ENCODE measurements at regions of chr11 and their contacts with region 1.

Region 1: DNA sequence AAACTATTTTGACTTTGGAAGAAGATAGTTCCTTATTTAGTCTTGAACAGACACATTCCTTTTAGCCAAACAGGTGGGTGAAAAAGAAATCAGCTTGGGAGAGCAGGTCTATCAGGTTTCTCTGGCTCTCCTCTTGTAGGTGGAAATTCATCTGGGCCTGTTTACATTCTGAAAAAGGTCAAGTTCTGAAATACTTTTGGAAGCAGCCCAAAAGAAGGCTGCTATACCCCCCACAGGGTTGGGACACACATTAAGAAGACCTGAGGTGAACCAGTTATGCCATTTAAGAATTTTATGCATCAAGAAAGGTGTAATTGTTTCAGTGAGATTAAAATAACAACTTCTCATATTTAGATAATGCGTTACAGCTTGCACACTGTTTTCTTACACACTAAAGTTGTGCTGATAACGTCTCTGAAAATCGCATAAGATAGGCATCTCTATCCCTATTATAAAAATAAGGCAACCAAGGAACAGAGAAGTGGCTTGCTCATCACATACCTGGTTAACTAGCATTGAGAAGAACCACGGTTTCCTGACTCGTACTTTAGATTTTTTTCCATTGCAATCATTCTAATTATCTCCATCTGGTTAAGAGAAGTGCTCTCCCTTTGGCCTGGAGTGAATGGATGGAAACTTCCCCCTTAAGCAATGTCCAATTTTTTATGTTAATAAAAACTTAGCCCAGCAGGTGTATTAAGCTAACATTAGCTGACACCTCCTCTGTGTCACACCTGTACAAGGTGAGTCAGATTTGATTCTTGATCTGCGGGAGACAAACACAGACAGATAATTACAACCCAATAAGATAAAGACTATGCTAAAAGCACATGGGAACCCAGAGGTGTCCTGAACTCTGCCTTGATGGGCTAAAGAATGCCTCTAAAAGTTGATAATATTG is 60.5 kb upstream of the UCP3 start:
- DNase-seq: peak; percentile 28 to 39
- ATAC-seq: peak; percentile 73
- H3K4me3 ChIP-seq: peak overlapping the region; percentile 10 to 56 (median 32)
- H3K27ac ChIP-seq: peak overlapping the region; percentile 84 to 94 (median 90)
- H3K4me1 ChIP-seq: peaks cover 23 to 38% of the 10 kb centered on the region in 2 donors
- H3K27me3 ChIP-seq: no peaks in the 10 kb centered on the region
- CTCF ChIP-seq: no peak
- POLR2A ChIP-seq: peak in 1 of 2 donors; percentile 43

Region 2: GRCh38 chr11:73982969-73983740 is 86.2 kb before region 1 on chr11:
- in situ Hi-C with region 1: no loop called
- intact Hi-C with region 1: loop called (anchors 2 kb)
- DNase-seq: peak; percentile 93 to 95
- ATAC-seq: peak; percentile 84 to 86
- H3K4me3 ChIP-seq: peak overlapping the region; percentile 66 to 88 (median 75)
- H3K27ac ChIP-seq: peak overlapping the region; percentile 93 to 99 (median 95)
- H3K4me1 ChIP-seq: peaks cover 12 to 36% of the 10 kb centered on the region in 2 donors
- H3K27me3 ChIP-seq: no peaks in the 10 kb centered on the region
- CTCF ChIP-seq: no peak
- POLR2A ChIP-seq: peak; percentile 74 to 92

Region 3: GRCh38 chr11:74185695-74186094 is 116.3 kb after region 1 on chr11:
- in situ Hi-C with region 1: no loop called
- intact Hi-C with region 1: no loop called
- DNase-seq: no peak
- ATAC-seq: peak; percentile 68 to 85
- H3K4me3 ChIP-seq: peak overlapping the region in 1 of 4 donors; percentile 7
- H3K27ac ChIP-seq: peak overlapping the region in 3 of 4 donors; percentile 4 to 65 (median 56)
- H3K4me1 ChIP-seq: peaks cover 11 to 26% of the 10 kb centered on the region in 2 donors
- H3K27me3 ChIP-seq: no peaks in the 10 kb centered on the region
- CTCF ChIP-seq: no peak
- POLR2A ChIP-seq: no peak

Measured in gastrocnemius medialis (tissue), 4 donors.